Panc1 (cell line): ENCODE measurements at regions of chr2 and their contacts with region 1.

Region 1: GRCh38 chr2:12716282-12717190 is at the start of gene TRIB2:
- DNase-seq: no peak
- ATAC-seq: peak; percentile 81
- H3K4me3 ChIP-seq: peak within 1 kb of the TSS; percentile 70 to 92
- H3K27ac ChIP-seq: peak within 1 kb of the TSS; percentile 96
- H3K4me1 ChIP-seq: peaks cover 40% of the 10 kb centered on the region
- H3K27me3 ChIP-seq: no peaks in the 10 kb centered on the region
- CTCF ChIP-seq: peak; percentile 67
- total RNA-seq, gene TRIB2: 43.2 TPM

Region 2: DNA sequence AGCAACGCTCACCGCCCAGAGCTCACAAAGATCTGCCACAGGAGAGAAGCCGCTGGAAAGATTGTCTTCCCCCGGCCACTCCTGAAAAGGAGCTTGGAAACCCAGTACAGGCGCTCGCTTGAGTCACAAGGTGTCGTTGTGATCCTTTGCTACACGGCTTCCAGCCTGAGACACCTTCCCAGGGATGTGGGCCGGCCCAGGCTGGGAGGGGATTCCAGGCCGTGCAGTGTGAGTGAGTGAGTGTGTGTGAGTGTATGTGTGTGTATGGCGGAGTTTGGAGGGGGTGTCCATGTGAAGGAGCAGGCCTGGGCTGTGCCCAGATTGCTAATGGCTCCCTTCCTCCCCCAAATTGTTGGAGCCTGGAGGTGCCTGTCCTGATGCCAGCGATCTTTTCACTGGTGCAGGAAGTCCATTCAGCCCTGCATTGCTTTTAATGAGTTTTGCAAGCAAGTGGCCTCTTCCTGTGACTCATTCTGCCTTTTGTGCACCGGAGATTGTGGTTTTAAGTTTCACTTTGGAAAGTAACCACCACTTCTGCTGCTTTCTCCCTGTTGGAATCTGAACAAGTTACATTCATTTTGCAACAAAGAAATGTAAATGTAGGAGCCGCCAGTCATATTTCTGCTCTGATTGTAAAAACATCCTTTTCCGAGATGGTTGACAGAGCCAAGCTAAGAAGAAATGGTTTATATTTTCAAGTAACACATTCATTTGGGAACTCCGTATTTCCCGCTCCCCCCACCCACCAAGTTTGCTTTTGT is 886.4 kb before region 1 on chr2:
- CTCF ChIA-PET with region 1: interaction called, 14 read pairs
- POLR2A ChIA-PET with region 1: no interaction called
- in situ Hi-C with region 1: no loop called
- intact Hi-C with region 1: loop called (anchors 1 kb)
- DNase-seq: peak; percentile 89
- ATAC-seq: peak; percentile 97
- H3K4me3 ChIP-seq: peak overlapping the region; percentile 33 to 53
- H3K27ac ChIP-seq: peak overlapping the region; percentile 98
- H3K4me1 ChIP-seq: peaks cover 22% of the 10 kb centered on the region
- H3K27me3 ChIP-seq: no peaks in the 10 kb centered on the region
- CTCF ChIP-seq: peak; percentile 77

Region 3: DNA sequence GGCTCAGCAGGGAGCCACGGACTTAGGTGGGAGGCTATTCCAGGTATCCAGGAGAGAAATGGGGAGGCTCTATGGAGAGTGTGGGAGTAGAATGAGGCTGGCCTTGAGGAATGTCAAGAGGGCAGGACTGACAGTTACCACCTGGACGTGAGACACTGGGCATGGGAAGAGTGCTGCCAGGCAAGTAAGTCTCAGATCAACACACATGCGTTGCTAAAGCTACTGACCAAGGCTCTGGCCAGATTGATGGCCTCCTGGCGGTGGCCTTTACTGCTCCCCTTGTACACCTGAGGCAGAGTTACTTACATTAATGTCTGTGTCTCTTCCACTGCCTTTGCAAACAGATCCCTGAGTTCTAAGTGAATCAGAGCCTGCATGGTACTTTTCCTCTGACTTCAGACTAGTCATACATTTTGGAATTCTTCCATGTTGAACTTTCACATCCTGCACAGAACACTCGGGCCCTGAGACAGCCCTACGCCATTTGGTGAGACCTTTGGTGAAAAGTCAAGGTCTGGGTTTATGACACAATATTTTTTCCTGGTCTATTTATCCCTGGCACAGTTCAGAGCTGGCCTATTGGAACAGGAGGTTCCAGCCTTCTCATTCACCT is 398.6 kb before region 1 on chr2:
- CTCF ChIA-PET with region 1: interaction called, 7 read pairs
- POLR2A ChIA-PET with region 1: no interaction called
- in situ Hi-C with region 1: no loop called
- intact Hi-C with region 1: loop called (anchors 5 kb)
- DNase-seq: no peak
- ATAC-seq: peak; percentile 75
- H3K4me3 ChIP-seq: peak overlapping the region in 1 of 2 experiments; percentile 24; a peak in 1 of 4 replicates
- H3K27ac ChIP-seq: peak overlapping the region; percentile 97
- H3K4me1 ChIP-seq: peaks cover 11% of the 10 kb centered on the region
- H3K27me3 ChIP-seq: no peaks in the 10 kb centered on the region
- CTCF ChIP-seq: peak; percentile 15; the same call in 1 of the 2 replicates

Region 4: DNA sequence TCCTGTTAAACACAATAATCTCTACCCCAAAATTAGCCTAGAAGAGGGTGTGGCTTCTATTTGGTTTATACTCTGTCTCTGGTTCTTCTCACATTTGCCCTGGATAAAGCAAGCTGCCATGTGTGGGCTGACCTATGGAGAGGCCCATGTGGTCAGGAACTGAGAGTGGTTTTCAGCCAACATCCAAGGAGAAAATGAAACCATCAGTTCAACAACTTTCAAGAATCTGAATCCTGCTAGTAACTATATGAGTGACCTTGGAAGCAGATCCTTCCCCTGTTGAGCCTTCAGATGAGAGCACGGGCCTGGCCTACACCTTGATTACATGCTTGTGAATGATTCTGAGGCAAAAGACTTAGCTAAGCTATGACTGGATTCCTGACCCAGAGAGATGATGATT is 11.3 kb before region 1 on chr2:
- CTCF ChIA-PET with region 1: interaction called, 10 read pairs
- POLR2A ChIA-PET with region 1: no interaction called
- in situ Hi-C with region 1: no loop called
- intact Hi-C with region 1: no loop called
- DNase-seq: no peak
- ATAC-seq: no peak
- H3K4me3 ChIP-seq: no peak overlapping the region
- H3K27ac ChIP-seq: no peak overlapping the region
- H3K4me1 ChIP-seq: no peaks in the 10 kb centered on the region
- H3K27me3 ChIP-seq: no peaks in the 10 kb centered on the region
- CTCF ChIP-seq: no peak

Region 5: DNA sequence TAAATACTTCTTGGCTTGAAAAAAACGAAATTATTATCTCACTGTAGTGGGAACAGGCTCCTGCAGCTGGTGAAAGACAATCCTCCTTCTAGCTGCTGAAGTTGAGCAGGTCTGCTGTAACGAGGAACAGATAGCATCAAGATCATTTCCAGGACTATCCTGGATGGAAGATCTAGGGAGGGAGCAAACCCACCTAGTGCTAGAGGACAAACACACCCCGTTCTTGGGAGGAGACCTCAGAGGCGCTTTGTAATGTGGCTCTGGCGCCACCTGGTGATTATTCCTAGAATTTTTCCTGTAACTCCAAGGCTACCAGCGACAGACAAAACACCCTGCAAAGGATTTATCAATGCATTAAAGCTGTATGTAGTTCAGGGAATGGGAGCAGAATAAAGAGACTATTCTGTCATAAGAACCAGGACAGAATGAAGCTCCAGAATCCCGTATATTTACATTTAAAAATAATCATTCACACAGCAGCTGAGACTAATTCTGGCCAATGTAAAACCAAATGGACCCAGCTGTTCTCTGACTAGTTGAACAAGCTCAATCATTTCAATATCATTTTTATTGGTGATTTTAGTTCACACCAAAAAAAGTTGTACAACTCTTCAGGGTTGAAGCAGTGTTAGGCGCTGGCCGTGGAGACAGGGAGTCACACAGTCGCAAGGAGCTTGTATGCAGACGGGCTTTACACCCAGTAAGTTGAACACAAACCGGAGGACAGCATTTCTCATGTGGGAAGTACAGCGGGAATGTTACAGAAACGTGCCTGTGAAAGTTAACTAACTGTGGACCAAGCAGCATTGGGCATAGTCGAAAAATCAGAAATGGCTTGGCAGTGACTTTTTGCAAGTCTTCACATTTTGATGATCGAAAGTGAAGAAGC is 290.5 kb after region 1 on chr2:
- CTCF ChIA-PET with region 1: interaction called, 13 read pairs
- POLR2A ChIA-PET with region 1: interaction called, 3 read pairs
- in situ Hi-C with region 1: no loop called
- intact Hi-C with region 1: loop called (anchors 2 kb)
- DNase-seq: peak; percentile 60
- ATAC-seq: peak; percentile 97
- H3K4me3 ChIP-seq: peak overlapping the region in 1 of 2 experiments; percentile 16; a peak in 2 of 4 replicates
- H3K27ac ChIP-seq: peak overlapping the region; percentile 66
- H3K4me1 ChIP-seq: peaks cover 11% of the 10 kb centered on the region
- H3K27me3 ChIP-seq: no peaks in the 10 kb centered on the region
- CTCF ChIP-seq: peak; percentile 90